ENCODE measurements at regions of chr3 and their contacts with region 1.

Region 1: GRCh38 chr3:184513276-184514170 is 48.1 kb upstream of the EPHB3 start:
- DNase-seq: peak; percentile 89
- H3K4me3 Mint-ChIP-seq: peak overlapping the region; percentile 63
- H3K27ac Mint-ChIP-seq: no peak overlapping the region
- H3K4me1 Mint-ChIP-seq: peaks cover 8% of the 10 kb centered on the region
- H3K27me3 Mint-ChIP-seq: peaks cover 41% of the 10 kb centered on the region

Region 2: GRCh38 chr3:184354121-184354728 is 159.3 kb before region 1 on chr3:
- CTCF ChIA-PET with region 1: interaction called, 4 read pairs
- intact Hi-C with region 1: loop called (anchors 1 kb)
- DNase-seq: peak; percentile 76
- H3K4me3 Mint-ChIP-seq: no peak overlapping the region
- H3K27ac Mint-ChIP-seq: no peak overlapping the region
- H3K4me1 Mint-ChIP-seq: no peaks in the 10 kb centered on the region
- H3K27me3 Mint-ChIP-seq: no peaks in the 10 kb centered on the region

Region 3: DNA sequence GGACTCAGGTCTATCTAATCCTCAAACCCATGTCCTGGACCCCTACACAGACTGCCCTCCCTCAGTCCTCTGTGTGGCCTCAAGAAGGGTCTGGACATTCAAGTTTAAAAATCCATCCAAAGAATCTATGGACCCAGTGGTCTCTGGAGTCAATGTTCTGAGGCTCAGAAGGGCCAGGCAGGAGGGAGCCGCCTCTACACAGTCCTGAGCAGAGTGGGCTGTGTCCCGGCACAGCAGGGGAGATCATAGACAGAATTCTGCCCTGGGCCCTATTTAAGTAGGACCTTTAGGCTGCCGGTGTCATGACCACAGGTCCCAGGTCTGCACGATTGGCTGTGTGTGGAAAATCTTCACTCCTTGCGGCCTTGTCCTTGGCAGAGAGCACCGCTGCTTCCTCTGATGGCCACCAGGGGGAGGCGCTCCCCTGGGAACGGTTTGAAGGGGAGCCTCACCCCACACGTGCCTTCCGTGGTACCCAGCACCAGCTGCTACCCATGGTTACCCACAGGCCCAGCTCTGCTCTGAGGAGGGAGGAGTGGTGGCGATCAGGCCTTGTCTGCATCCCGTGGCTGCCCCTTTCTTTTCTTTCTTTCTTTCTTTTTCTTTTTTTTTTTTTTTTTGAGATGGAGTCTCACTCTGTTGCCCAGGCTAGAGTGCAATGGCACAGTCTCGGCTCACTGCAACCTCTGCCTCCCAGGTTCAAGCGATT is 95.8 kb before region 1 on chr3:
- CTCF ChIA-PET with region 1: interaction called, 52 read pairs
- intact Hi-C with region 1: loop called (anchors 1 kb)
- DNase-seq: peak; percentile 78
- H3K4me3 Mint-ChIP-seq: no peak overlapping the region
- H3K27ac Mint-ChIP-seq: no peak overlapping the region
- H3K4me1 Mint-ChIP-seq: no peaks in the 10 kb centered on the region
- H3K27me3 Mint-ChIP-seq: no peaks in the 10 kb centered on the region

Region 4: GRCh38 chr3:184474897-184475296 is 38.6 kb before region 1 on chr3:
- CTCF ChIA-PET with region 1: interaction called, 49 read pairs
- intact Hi-C with region 1: no loop called
- DNase-seq: no peak
- H3K4me3 Mint-ChIP-seq: no peak overlapping the region
- H3K27ac Mint-ChIP-seq: no peak overlapping the region
- H3K4me1 Mint-ChIP-seq: peaks cover 20% of the 10 kb centered on the region
- H3K27me3 Mint-ChIP-seq: peaks cover 12% of the 10 kb centered on the region

Region 5: DNA sequence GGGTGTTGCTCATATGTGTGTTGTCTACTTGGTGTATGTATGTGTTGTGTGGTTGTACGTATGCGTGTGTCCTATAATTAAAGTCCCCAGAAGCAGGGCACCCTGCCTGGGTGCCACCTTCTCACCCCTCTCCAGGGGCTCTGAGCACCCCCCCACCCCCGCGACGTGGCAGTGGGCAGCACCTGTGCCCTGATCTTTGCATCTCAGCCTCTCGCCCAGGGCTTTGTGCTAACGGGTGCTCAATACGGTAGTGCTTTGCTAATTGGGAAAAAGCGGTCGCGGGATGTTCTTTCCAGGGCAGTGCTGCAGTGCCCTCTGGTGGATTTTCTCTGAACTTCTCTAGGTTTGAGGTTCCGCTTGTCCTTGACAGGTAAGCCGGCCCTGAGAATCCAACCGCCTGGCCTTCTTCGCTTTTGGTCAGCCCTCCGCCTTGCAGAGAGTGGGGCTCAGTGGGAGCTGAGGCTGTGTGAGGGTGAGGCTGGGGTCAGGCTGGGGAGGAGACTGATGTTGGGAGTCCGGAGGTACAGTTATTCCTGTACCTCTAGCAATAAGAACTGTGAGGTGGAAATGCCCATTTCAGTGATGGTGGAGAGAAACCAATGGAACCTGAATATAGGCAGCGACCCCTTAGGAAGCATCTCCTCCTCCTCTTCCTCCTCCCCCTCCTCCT is 30.5 kb after region 1 on chr3:
- CTCF ChIA-PET with region 1: interaction called, 45 read pairs
- intact Hi-C with region 1: loop called (anchors 1 kb)
- DNase-seq: peak; percentile 89
- H3K4me3 Mint-ChIP-seq: no peak overlapping the region
- H3K27ac Mint-ChIP-seq: no peak overlapping the region
- H3K4me1 Mint-ChIP-seq: peaks cover 8% of the 10 kb centered on the region
- H3K27me3 Mint-ChIP-seq: no peaks in the 10 kb centered on the region

Measured in activated naive CD4-positive, alpha-beta T cell treated with anti-CD3 and anti-CD28 coated beads for 36 hours (primary cell).